Dorsolateral prefrontal cortex (tissue), 120 donors: ENCODE measurements at regions of chr1 and their contacts with region 1.

Region 1: DNA sequence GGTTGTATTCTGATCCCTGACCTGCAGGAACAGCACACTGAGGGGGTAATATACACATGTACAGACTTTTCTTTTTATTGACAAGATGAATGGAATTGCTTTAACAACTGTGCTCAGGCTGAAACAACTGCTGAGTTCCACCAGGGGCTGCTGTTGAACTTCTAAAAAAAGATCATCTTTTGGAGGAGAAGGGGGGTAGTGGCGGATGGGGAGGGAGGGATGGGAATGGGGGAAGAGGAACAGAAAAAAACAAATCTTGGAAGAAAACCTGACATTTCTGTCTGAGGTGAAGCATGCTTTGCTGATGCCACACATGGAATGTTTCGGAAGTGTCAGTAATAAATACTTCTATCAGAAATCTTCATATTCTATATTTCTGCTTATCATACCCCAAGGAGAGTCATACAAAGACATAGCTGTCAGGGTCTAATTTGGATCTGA is 75.0 kb downstream of the RWDD3 start:
- DNase-seq: peak in 3 of 10 donors; percentile 10 to 57 (median 38)
- H3K4me3 ChIP-seq: peak overlapping the region in 13 of 59 donors; percentile 1 to 36 (median 13)
- H3K27ac ChIP-seq: no peak overlapping the region
- H3K27me3 ChIP-seq: no peaks in the 10 kb centered on the region
- CTCF ChIP-seq: peak; percentile 31 to 82 (median 70)

Region 2: DNA sequence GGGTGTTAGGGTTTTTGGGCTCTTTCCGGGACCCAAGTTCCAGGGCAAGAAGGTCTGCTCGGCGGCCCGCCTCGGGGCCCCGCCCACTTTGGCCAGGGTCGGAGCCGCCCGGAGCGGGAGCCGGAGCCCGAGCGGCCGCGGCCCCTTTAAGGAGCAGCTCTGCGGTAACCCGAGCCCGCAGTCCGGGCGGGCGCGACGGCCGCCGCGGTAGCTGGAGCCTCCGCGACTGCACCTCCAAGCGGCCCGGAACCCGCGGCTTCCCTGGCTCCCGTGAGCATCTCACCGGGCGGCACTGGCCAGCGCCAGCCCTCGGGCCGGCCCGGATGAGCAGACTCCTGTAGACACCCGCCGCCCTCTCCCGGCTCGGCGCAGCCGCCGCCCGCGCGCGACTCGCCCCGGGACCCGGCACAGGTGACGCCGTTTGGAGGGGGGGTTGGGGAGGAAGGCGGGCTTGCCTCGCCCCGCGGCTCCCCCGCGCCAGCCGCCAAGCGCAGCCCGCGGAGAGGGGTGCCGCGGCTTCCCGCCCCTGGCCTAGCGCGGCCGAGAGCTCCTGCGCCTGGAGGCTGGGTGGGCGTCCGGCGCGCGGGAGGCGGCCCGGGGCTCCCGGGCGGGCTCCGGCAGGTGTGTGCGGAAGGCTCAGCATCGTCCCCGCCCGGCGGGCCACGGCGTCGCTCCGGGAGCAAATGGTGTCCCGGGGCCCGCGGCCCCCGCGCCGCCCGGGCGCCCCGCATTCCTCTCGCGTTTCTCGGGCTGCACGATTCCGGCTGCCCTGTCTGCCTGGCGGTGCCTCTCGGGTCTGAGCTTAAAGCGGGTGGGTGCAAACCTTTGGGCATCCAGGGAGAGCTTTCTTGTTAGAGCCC is 191.6 kb before region 1 on chr1 and contains the start of gene TLCD4:
- intact Hi-C with region 1: no loop called
- DNase-seq: peak in 9 of 10 donors; percentile 15 to 76 (median 47)
- H3K4me3 ChIP-seq: peak within 1 kb of the TSS; percentile 41 to 92 (median 77)
- H3K27ac ChIP-seq: peak within 1 kb of the TSS in 57 of 59 donors; percentile 20 to 92 (median 76)
- H3K27me3 ChIP-seq: no peaks in the 10 kb centered on the region
- CTCF ChIP-seq: no peak
- total RNA-seq, gene TLCD4: 30.3 to 104 (median 55.5) TPM

Region 3: DNA sequence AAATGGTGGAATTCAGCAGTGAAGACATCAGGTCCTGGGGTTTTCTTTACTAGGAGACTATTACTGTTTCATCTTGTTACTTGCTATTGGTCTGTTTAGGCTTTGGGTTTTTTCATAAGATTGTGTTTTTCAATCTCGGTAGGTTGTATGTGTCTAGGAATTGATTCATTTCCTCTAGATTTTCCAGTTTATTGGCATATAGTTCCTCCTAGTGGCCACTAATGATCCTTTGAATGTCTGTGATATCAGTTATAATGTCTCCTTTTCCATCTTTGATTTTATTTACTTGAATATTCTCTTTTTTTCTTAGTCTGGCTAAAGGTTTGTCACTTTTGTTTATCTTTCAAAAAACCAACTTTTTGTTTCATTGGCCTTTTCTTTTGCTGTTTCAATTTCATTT is 158.0 kb after region 1 on chr1:
- intact Hi-C with region 1: loop called (anchors 5 to 10 kb)
- DNase-seq: no peak
- H3K4me3 ChIP-seq: no peak overlapping the region
- H3K27ac ChIP-seq: no peak overlapping the region
- H3K27me3 ChIP-seq: no peaks in the 10 kb centered on the region
- CTCF ChIP-seq: peak in 48 of 56 donors; percentile 11 to 66 (median 39)

Region 4: DNA sequence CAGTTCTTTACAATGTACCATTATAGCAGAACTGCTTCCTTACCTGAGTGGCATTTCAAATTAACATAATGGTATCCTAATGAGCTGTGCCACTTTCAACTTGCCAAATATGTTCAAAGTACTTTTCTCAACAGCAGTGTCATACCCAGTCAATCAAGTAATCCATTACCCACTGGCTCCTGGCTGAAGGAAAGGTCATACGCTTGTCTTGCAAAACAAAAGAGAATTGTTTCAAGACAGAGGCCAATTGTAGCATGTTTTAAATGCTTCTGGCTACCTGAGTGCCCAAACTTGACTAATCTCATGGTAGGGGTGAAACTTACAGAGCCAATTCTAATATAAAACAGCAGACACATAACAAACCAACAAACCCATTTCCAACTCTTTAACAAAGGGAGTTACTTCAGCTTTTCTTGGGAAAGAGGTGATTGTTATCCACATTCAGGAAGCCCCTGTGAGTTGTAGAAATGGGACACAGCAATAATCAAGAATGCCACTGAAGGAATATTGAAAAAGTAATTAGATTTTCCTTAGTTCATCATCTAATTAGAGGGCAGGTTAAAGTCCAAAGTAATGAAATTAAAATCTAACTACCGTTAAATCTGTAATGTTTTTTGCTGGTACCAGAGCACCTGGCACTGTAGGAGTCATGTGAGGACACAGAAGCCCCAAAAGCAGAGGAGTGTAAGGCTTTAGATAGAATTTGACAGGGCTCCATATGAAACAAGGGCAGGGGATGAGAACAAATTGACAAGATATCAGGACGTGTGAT is 166.8 kb after region 1 on chr1:
- intact Hi-C with region 1: loop called in 1 of 2 experiments (anchors 10 kb)
- DNase-seq: no peak
- H3K4me3 ChIP-seq: no peak overlapping the region
- H3K27ac ChIP-seq: no peak overlapping the region
- H3K27me3 ChIP-seq: no peaks in the 10 kb centered on the region
- CTCF ChIP-seq: no peak